Breast epithelium (tissue), 4 donors: ENCODE measurements at regions of chr1 and their contacts with region 1.

Region 1: DNA sequence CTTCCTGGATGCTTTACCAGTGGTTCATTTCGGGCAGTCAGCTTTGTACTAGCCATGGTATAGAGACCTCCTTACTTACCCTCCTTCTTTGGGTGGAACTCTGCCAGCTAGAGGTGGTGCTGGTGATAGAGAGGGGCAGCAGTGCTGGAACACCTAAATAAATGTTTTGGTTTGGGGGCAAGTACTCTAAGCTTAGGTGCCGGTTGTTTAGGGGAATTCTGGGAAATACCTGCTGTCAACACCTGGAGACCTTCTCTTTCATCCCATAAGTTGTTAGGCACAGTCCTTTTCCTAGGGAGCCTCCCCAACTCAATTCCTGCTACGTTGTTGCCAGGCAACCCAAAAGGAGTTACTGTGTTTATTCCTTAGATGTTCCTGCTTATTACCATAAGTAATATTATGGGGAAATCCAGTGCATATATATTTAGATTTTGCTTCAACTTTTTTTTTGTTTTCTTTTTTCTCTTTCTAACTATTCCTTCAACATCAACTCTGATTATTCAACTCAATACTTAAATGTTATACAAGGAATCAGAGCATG is 16.9 kb downstream of the SCP2 start:
- DNase-seq: no peak
- H3K4me3 ChIP-seq: no peak overlapping the region
- H3K27ac ChIP-seq: no peak overlapping the region
- H3K4me1 ChIP-seq: no peaks in the 10 kb centered on the region
- H3K27me3 ChIP-seq: no peaks in the 10 kb centered on the region
- CTCF ChIP-seq: no peak
- POLR2A ChIP-seq: no peak

Region 2: GRCh38 chr1:53644909-53645689 is 701.2 kb after region 1 on chr1:
- intact Hi-C with region 1: loop called (anchors 5 kb)
- DNase-seq: peak in 1 of 2 donors; percentile 10
- H3K4me3 ChIP-seq: no peak overlapping the region
- H3K27ac ChIP-seq: no peak overlapping the region
- H3K4me1 ChIP-seq: no peaks in the 10 kb centered on the region
- H3K27me3 ChIP-seq: no peaks in the 10 kb centered on the region
- CTCF ChIP-seq: no peak
- POLR2A ChIP-seq: no peak